Left colon (tissue), 2 donors: ENCODE measurements at regions of chr18 and their contacts with region 1.

Region 1: GRCh38 chr18:35352778-35353177 is 8.6 kb upstream of the ZNF24 start:
- DNase-seq: no peak
- ATAC-seq: no peak

Region 2: DNA sequence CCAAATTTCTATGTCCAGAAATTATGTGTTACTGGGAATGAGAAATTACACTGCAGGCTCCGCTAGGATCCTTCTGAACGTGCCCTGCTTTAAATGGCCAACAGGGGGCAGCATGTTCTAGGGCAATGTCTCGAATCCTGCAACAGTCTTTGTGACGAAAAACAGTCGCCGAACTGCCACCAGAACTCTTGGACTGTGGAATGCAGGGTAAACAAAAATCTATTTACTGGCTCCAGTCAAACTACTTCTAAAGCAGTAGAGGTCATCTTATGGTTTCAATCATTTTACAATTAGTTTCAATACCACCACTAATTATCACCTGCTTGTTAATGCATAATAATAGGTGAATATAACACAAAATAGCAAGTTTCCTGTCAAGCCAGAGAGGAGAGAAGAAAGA is 121.7 kb before region 1 on chr18:
- intact Hi-C with region 1: loop called in 1 of 2 experiments (anchors 5 kb)
- DNase-seq: peak; percentile 74 to 84
- ATAC-seq: peak; percentile 98